Activated B cell treated with CpG ODN at 0.5 μM for 24 hours (primary cell): ENCODE measurements at regions of chr17 and their contacts with region 1.

Region 1: GRCh38 chr17:80737106-80738019 is 192.7 kb downstream of the RPTOR start:
- DNase-seq: peak; percentile 59
- ATAC-seq: peak; percentile 85
- H3K4me3 Mint-ChIP-seq: peak overlapping the region; percentile 65
- H3K27ac Mint-ChIP-seq: peak overlapping the region; percentile 87
- H3K4me1 Mint-ChIP-seq: peaks cover 62% of the 10 kb centered on the region
- H3K27me3 Mint-ChIP-seq: no peaks in the 10 kb centered on the region
- CTCF ChIP-seq: no peak

Region 2: DNA sequence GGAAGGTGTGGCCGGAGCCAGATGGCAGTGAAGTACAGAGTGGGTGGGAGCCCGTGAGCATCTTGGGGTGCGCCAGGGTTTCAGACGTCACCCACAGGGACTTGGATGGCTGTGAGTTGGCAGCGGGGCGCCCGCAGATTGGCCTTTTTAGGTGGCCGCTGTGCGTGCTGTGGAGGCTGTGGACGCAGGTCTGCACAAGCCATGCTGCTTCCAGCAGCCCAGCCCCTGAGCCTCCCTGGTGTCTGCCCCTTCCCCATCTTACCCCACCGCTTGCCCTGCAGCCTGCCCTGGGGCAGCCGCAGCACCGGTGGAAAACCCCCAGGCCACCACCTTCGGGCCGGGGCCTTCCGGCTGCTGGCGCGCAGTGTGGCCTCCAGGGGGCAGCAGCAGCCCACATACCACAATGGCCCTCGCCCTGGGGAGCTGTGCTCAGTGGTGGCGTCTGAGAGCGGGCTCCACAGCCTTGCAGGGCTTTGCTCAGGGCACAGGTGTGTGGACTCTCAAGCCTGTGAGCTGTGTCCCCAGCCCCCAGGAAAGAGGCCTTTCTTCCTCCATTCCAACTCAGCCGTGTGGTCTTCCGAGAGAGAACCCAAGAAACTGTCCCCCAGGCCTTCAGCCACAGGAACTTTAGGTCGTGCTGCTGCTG is 310.6 kb before region 1 on chr17:
- CTCF ChIA-PET with region 1: no interaction called
- POLR2A ChIA-PET with region 1: no interaction called
- intact Hi-C with region 1: loop called (anchors 5 kb)
- DNase-seq: peak; percentile 87
- ATAC-seq: peak; percentile 97
- H3K4me3 Mint-ChIP-seq: no peak overlapping the region
- H3K27ac Mint-ChIP-seq: no peak overlapping the region
- H3K4me1 Mint-ChIP-seq: peaks cover 29% of the 10 kb centered on the region
- H3K27me3 Mint-ChIP-seq: no peaks in the 10 kb centered on the region
- CTCF ChIP-seq: peak; percentile 79

Region 3: DNA sequence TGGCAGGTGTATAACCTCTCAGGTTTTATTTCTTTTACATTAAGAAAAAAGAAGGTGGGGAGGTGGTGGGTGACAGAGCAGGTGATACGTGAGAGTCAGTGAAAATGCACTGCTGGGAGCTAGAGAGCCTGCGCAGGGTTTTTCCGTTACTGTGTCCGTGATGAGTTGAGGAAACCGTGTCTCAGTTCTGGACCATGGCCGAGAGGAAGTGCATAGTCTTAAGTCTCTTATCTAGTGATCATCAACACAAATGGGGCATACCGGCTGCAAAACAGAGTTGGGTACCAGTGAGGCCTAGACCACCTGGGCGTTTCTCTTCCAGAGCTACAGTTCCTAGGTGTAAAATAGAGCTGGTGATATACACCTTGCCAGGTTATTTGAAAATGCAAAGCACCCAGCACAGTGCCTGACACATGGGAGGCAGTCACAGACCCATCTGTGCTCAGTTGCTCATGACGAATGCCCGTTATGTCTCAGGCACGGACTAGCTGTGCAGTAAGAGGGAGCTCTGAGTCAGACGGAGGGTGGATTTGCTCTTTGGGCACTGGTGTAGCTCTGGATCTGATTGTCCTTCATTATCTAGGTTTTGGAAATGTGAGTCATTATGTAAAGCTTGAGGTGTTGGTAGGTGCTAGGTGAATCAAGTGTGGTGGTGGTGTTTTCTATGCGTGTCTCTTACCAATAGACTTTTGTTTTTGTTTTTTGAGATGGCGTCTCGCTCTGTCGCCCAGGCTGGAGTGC is 131.9 kb before region 1 on chr17:
- CTCF ChIA-PET with region 1: no interaction called
- POLR2A ChIA-PET with region 1: no interaction called
- intact Hi-C with region 1: loop called (anchors 1 kb)
- DNase-seq: peak; percentile 25
- ATAC-seq: peak; percentile 94
- H3K4me3 Mint-ChIP-seq: peak overlapping the region; percentile 48
- H3K27ac Mint-ChIP-seq: peak overlapping the region; percentile 79
- H3K4me1 Mint-ChIP-seq: peaks cover 53% of the 10 kb centered on the region
- H3K27me3 Mint-ChIP-seq: no peaks in the 10 kb centered on the region
- CTCF ChIP-seq: no peak

Region 4: GRCh38 chr17:80675438-80676095 is 61.8 kb before region 1 on chr17:
- CTCF ChIA-PET with region 1: no interaction called
- POLR2A ChIA-PET with region 1: no interaction called
- intact Hi-C with region 1: no loop called
- DNase-seq: no peak
- ATAC-seq: no peak
- H3K4me3 Mint-ChIP-seq: no peak overlapping the region
- H3K27ac Mint-ChIP-seq: no peak overlapping the region
- H3K4me1 Mint-ChIP-seq: peaks cover 34% of the 10 kb centered on the region
- H3K27me3 Mint-ChIP-seq: no peaks in the 10 kb centered on the region
- CTCF ChIP-seq: no peak

Region 5: DNA sequence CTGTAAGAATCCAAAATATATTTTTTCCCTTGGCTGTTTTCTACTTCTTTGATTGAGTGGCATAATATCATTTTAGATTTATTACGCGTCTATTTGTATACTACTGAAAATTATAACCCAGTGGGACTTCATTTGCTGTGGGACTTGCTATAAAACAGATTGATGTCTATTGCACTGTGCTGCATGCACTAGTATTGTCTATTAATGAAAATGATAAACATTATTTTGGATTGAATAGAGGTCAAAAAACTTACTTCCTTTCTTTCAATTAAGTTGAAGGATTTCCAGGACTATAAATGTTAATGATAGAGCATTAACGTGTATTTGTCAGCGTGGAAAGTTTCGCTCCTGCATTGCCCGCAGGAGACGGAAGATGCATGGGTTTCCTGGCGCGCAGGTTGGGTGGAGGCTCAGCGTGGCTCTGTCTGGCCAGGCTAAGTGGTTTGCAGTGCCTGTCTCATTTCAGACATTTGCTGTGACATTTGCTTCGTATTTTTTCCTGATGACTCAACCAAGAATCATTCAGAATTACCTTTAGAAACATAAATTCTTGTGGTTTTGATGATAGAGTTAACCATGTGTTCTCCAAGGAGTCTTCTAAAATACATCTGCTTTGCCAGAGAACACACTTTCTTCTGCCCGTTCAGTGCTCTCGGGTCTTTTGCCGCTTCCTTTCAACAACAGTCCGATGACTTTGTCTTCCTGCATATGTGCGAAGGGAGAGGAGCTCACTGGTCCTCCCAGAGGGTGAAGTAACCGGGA is 23.9 kb after region 1 on chr17:
- CTCF ChIA-PET with region 1: interaction called, 3 read pairs
- POLR2A ChIA-PET with region 1: interaction called, 3 read pairs
- intact Hi-C with region 1: loop called (anchors 1 kb)
- DNase-seq: no peak
- ATAC-seq: peak; percentile 18
- H3K4me3 Mint-ChIP-seq: peak overlapping the region; percentile 21
- H3K27ac Mint-ChIP-seq: peak overlapping the region; percentile 19
- H3K4me1 Mint-ChIP-seq: peaks cover 64% of the 10 kb centered on the region
- H3K27me3 Mint-ChIP-seq: no peaks in the 10 kb centered on the region
- CTCF ChIP-seq: no peak

Region 6: GRCh38 chr17:80791758-80792284 is 54.5 kb after region 1 on chr17:
- CTCF ChIA-PET with region 1: interaction called, 6 read pairs
- POLR2A ChIA-PET with region 1: interaction called, 7 read pairs
- intact Hi-C with region 1: loop called (anchors 10 kb)
- DNase-seq: no peak
- ATAC-seq: no peak
- H3K4me3 Mint-ChIP-seq: no peak overlapping the region
- H3K27ac Mint-ChIP-seq: no peak overlapping the region
- H3K4me1 Mint-ChIP-seq: peaks cover 23% of the 10 kb centered on the region
- H3K27me3 Mint-ChIP-seq: no peaks in the 10 kb centered on the region
- CTCF ChIP-seq: no peak

Region 7: DNA sequence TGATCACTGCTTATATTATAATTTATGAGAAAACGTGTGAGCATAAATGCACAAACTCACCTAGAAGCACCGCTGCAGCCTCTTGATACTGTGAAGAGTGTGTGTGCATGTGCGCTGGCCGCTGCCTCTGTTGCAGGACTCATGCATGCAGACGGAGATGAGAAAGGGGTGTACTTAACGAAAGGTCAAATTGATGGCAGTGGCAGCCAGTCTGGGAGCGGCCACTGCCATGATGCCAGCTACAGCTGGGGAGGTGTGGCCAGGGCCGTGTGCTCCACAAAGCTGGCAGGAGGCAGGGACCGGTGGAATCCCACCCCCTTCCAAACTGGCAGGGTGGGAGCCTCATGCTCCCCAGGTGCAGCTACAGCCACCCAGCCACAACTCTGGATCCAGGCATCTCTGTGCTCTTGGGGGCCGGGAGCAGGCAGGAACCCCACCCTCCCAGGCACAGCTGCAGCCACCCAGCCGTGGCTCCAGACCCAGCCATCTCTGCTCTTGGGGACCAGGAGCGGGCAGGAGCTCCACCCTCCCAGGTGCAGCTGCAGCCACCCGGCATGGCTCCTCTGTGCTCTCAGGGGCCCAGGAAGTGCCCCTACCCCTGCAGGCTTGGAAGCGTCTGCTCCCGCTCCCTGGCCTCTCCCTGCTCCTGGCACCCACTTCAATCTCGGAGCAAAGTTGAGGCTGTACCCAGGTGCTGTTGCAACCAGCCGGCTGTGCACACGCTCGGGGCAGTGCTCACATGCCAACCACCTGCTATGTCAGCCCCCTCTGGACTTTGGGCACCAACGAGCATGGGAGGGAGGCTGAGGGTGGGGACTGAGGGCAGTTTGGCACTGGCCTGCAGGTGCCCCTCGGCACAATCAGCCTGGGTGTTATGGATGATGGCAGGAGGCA is 176.8 kb after region 1 on chr17:
- CTCF ChIA-PET with region 1: no interaction called
- POLR2A ChIA-PET with region 1: interaction called, 3 read pairs
- intact Hi-C with region 1: loop called (anchors 5 kb)
- DNase-seq: no peak
- ATAC-seq: no peak
- H3K4me3 Mint-ChIP-seq: peak overlapping the region; percentile 66
- H3K27ac Mint-ChIP-seq: peak overlapping the region; percentile 85
- H3K4me1 Mint-ChIP-seq: peaks cover 57% of the 10 kb centered on the region
- H3K27me3 Mint-ChIP-seq: no peaks in the 10 kb centered on the region
- CTCF ChIP-seq: no peak

Region 8: DNA sequence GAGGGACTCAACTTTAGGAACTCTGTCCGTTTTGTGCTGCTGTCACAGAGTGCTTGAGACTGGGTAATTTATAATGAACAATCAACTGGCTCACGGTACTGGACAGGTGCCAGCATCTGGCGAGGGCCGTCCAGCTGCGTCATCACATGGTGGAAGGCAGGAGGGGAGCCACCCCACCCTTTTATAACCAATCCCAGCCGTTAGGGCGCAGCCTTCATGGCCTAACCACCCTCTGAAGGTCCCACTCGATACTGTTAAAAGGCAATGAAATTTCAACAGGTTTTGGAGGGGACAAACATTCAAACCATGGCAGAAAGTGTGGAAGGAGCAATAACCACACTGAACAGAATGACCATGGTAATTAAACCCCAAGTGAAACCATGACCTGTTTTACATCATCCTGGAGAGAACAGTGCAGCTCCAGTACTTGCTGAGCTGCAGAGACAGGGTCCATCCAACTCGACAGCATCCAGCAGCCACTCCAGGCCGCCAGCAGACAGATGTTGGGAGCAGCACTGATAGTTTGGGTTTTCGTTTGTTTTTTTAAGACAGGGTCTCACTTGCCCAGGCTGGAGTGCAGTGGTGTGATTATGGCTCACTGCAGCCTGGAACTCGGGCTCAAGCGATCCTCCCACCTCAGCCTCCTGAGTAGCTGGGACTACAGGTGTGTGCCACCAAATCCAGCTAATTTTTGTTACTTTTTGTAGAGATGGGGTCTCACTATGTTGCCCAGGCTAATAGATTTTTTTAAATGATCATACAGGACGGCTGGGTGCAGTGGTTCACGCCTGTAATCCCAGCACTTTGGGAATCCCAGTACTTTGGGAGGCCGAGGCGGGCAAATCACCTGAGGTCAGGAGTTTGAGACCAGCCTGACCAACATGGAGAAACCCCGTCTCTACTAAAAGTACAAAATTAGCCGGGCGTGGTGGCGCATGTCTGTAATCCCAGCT is 265.3 kb after region 1 on chr17:
- CTCF ChIA-PET with region 1: no interaction called
- POLR2A ChIA-PET with region 1: no interaction called
- intact Hi-C with region 1: no loop called
- DNase-seq: no peak
- ATAC-seq: no peak
- H3K4me3 Mint-ChIP-seq: no peak overlapping the region
- H3K27ac Mint-ChIP-seq: no peak overlapping the region
- H3K4me1 Mint-ChIP-seq: peaks cover 11% of the 10 kb centered on the region
- H3K27me3 Mint-ChIP-seq: peaks cover 19% of the 10 kb centered on the region
- CTCF ChIP-seq: no peak